ENCODE measurements at regions of chr2 and their contacts with region 1.

Region 1: GRCh38 chr2:16608661-16609643 is 56.7 kb downstream of the CYRIA start:
- DNase-seq: peak; percentile 32
- ATAC-seq: peak; percentile 89
- H3K4me3 ChIP-seq: peak overlapping the region; percentile 20 to 39
- H3K27ac ChIP-seq: no peak overlapping the region
- H3K4me1 ChIP-seq: peaks cover 0 to 5% of the 10 kb centered on the region in 2 experiments; a peak in 2 of 4 replicates
- H3K27me3 ChIP-seq: peaks cover 23% of the 10 kb centered on the region; the same call in 1 of the 2 replicates
- CTCF ChIP-seq: peak; percentile 79 to 97 (median 89)
- POLR2A ChIP-seq: no peak
- RAD21 ChIP-seq: peak; percentile 73

Region 2: DNA sequence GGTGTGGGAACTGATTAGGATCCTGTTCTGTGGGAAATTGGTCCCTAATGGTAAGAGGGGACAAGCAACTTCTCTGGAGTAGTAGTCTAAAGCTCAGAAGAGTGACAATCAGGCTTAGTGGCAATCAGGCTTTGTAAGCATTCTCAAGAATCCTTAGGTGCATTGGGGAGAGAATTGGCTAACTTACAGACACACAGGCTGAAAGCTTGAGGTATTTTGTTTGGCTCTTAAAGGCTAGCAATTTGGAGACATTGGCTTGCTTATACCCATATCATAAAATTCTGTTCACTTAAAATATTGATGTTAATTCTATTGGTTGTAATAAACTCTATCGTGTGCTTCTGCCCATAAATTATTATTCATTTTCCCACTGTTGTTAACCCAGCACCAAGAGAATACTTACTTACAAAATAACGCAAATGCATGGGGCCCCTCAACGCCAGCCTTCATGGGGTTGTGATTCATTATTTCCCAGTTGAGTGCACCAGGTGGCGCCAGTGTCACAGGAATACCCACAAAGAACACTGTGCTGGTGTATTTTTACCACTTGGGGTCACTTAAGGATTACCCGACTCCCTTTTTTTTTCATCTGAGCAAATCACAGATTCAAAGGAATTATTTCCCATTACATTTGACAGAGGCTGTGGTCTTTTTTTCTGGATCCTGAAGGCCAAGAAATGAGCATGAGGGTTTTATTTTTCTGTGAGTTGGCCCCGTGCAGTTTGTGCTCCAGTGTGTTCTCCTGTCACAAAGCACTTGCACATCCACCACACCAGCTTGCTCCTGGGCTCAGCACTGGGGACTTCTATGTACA is 971.8 kb before region 1 on chr2:
- CTCF ChIA-PET with region 1: no interaction called
- POLR2A ChIA-PET with region 1: no interaction called
- RAD21 ChIA-PET with region 1: no interaction called
- intact Hi-C with region 1: loop called (anchors 1 kb)
- DNase-seq: peak; percentile 23
- ATAC-seq: peak; percentile 89
- H3K4me3 ChIP-seq: no peak overlapping the region
- H3K27ac ChIP-seq: no peak overlapping the region
- H3K4me1 ChIP-seq: peaks cover 0 to 4% of the 10 kb centered on the region in 2 experiments; a peak in 1 of 4 replicates
- H3K27me3 ChIP-seq: no peaks in the 10 kb centered on the region
- CTCF ChIP-seq: peak; percentile 68 to 99 (median 86)
- POLR2A ChIP-seq: no peak
- RAD21 ChIP-seq: peak; percentile 96

Region 3: DNA sequence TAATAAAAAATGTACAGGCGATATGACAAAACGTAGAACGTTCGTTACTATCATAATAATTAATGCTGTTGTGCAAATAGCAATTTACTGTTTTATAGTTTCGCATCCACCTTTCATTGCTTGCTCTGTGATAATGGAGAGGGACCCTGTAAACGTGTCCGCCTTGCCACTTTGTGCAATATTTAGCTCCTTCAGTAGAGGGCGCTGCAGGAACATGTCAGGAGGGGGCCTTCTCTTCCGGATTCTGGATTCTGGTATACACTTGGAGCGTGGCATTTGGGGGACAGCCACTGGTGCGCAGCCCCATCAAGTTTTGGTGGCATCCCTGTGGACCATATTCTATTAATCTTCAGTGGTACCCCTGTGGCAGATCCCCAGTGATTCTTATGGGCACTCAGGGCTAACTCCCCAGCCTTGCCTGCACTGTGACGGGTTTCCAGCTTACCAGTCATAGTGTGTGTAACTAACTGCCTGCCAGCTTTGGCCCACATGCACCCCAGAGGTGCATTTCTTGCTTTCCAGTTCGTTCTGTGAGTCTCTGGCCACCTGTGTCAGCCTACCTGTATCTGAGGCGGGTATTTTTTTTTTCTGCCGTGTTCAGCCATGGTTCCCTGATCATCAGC is 83.6 kb before region 1 on chr2:
- CTCF ChIA-PET with region 1: interaction called, 25 read pairs
- POLR2A ChIA-PET with region 1: no interaction called
- RAD21 ChIA-PET with region 1: no interaction called
- intact Hi-C with region 1: loop called (anchors 1 kb)
- DNase-seq: peak; percentile 6
- ATAC-seq: peak; percentile 71
- H3K4me3 ChIP-seq: no peak overlapping the region
- H3K27ac ChIP-seq: no peak overlapping the region
- H3K4me1 ChIP-seq: no peaks in the 10 kb centered on the region
- H3K27me3 ChIP-seq: no peaks in the 10 kb centered on the region; the same call in none of the 2 replicates
- CTCF ChIP-seq: peak; percentile 48 to 79 (median 68); a peak in 5 of 6 replicates
- POLR2A ChIP-seq: no peak
- RAD21 ChIP-seq: peak; percentile 66

Region 4: DNA sequence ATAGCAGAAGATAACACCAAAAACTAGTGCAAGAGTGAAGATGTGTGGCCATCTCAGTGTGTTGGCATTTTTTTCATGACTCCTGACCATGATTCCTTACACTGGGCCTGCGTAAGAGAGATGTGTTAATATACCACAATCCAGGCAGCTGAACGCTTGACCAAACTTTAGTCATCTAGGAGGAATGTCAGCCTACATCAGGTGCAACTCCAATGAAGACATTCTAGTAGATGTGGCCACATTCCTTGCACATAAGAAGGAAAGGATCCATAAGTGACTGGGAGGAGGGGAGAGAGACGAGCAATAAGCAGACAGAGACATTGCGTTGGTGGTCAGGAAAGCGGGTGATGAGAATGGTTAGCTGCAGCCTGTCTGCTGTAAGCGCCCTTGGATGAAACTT is 14.1 kb after region 1 on chr2:
- CTCF ChIA-PET with region 1: interaction called, 14 read pairs
- POLR2A ChIA-PET with region 1: no interaction called
- RAD21 ChIA-PET with region 1: no interaction called
- intact Hi-C with region 1: no loop called
- DNase-seq: no peak
- ATAC-seq: no peak
- H3K4me3 ChIP-seq: no peak overlapping the region
- H3K27ac ChIP-seq: no peak overlapping the region
- H3K4me1 ChIP-seq: no peaks in the 10 kb centered on the region
- H3K27me3 ChIP-seq: peaks cover 40% of the 10 kb centered on the region
- CTCF ChIP-seq: no peak
- POLR2A ChIP-seq: no peak
- RAD21 ChIP-seq: no peak

Region 5: GRCh38 chr2:16900405-16901025 is 291.6 kb after region 1 on chr2:
- CTCF ChIA-PET with region 1: no interaction called
- POLR2A ChIA-PET with region 1: no interaction called
- RAD21 ChIA-PET with region 1: no interaction called
- intact Hi-C with region 1: loop called (anchors 2 kb)
- DNase-seq: peak; percentile 45
- ATAC-seq: peak; percentile 82
- H3K4me3 ChIP-seq: no peak overlapping the region
- H3K27ac ChIP-seq: no peak overlapping the region
- H3K4me1 ChIP-seq: no peaks in the 10 kb centered on the region
- H3K27me3 ChIP-seq: no peaks in the 10 kb centered on the region
- CTCF ChIP-seq: peak; percentile 97 to 99 (median 98)
- POLR2A ChIP-seq: no peak
- RAD21 ChIP-seq: peak; percentile 53